ENCODE measurements at regions of chr1 and their contacts with region 1.

Region 1: DNA sequence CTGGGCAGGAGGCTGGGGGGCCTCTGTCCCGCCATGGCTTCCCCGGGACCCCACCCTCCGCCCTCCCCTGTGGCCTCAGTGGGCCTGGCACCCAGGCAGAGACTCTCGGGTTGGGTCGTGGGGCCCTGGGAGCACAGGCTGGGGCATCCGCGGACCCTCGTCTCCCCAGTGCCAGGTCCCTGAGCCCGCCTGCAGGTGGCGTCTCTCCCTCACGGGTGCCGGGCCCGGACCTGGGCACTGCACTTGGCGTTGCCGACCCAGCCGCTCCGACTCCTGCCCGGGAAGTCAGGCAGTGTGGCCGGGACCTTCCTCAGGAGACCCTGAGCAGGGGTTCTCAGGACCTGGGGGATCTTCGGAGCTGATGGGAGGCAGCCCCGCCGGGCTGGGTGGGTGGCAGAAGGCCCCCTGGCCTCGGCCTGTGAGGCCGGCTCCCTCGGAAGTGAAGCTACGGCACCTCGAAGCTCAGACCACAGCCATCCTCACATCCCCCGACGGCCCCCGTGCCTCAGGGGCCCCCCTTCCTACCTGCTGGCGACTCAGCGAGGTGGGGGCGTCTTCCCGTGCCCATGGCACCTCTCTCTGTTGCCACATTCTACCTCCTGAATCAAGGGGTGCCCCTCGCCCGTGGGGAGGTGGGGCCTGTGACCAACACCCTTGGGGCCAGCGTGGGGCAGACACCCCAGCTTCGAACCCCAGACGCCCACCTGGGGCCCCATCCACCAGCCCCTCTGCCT is 6.4 kb upstream of the C1orf159 start:
- DNase-seq: peak; percentile 78 to 92 (median 87)
- ATAC-seq: peak in 3 of 4 donors; percentile 88 to 94 (median 94)
- H3K4me3 ChIP-seq: peak overlapping the region in 10 of 12 donors; percentile 13 to 46 (median 32)
- H3K27ac ChIP-seq: no peak overlapping the region
- H3K4me1 ChIP-seq: peaks cover 0 to 11% (median 5%) of the 10 kb centered on the region in 12 donors
- H3K27me3 ChIP-seq: peaks cover 0 to 22% (median 0%) of the 10 kb centered on the region in 9 donors
- CTCF ChIP-seq: peak; percentile 84 to 95 (median 89)
- POLR2A ChIP-seq: no peak

Region 2: GRCh38 chr1:1171546-1172340 is 49.5 kb after region 1 on chr1:
- intact Hi-C with region 1: no loop called
- DNase-seq: peak in 3 of 5 donors; percentile 4 to 60 (median 17)
- ATAC-seq: no peak
- H3K4me3 ChIP-seq: no peak overlapping the region
- H3K27ac ChIP-seq: no peak overlapping the region
- H3K4me1 ChIP-seq: peaks cover 0 to 9% (median 0%) of the 10 kb centered on the region in 12 donors
- H3K27me3 ChIP-seq: peaks cover 28 to 91% (median 69%) of the 10 kb centered on the region in 9 donors
- CTCF ChIP-seq: no peak
- POLR2A ChIP-seq: no peak

Region 3: GRCh38 chr1:1225238-1225845 is 103.1 kb after region 1 on chr1:
- intact Hi-C with region 1: loop called in 5 of 10 experiments (anchors 5 to 10 kb)
- DNase-seq: no peak
- ATAC-seq: peak in 3 of 4 donors; percentile 11 to 36 (median 16)
- H3K4me3 ChIP-seq: no peak overlapping the region
- H3K27ac ChIP-seq: no peak overlapping the region
- H3K4me1 ChIP-seq: peaks cover 1 to 46% (median 16%) of the 10 kb centered on the region in 12 donors
- H3K27me3 ChIP-seq: no peaks in the 10 kb centered on the region
- CTCF ChIP-seq: no peak
- POLR2A ChIP-seq: no peak

Region 4: DNA sequence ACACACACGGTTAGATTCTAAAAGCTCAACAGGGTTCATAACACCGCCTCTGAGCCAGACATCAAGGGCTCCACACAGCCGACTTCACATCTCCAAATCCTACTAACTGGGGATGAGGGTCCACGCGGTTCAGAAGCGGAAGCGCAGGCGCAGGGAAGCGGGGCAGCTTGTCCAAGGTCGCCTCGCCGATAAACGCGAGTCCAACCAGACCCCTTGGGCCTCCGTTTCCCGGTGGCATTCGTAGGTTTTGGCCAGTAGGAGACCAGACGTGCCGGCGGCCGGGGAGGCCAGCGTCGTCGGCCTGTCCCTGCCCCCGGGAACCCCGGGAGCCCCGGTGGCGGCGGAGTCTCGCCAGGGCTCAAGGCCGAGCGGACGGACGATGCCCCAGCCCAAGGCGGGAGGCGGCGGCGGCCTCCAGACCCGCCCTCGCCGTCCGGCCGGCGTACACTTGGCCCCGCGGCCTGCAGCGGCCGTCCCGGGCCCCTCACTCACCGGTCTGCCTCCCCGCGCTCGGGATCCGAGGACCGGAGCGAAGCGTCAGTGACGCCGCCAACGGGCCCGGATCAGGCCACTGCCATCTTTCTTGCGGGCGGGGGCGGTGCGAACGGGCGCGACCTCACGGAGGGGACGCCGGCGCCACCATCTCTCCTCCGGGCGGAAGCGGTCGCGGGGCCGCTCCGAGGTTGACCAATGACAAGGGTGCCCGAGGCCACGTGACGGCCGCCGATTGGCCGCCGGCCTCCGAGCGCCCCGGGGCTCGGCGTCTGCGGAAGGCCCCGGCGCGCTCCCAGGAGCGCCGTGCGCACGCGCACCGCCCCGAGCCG is 109.4 kb after region 1 on chr1 and contains the start of gene SDF4:
- intact Hi-C with region 1: loop called in 5 of 10 experiments (anchors 5 to 10 kb)
- DNase-seq: peak; percentile 97 to 99 (median 98)
- ATAC-seq: peak; percentile 96 to 98 (median 97)
- H3K4me3 ChIP-seq: peak within 1 kb of the TSS; percentile 81 to 100 (median 98)
- H3K27ac ChIP-seq: peak within 1 kb of the TSS; percentile 92 to 99 (median 97)
- H3K4me1 ChIP-seq: peaks cover 8 to 49% (median 31%) of the 10 kb centered on the region in 12 donors
- H3K27me3 ChIP-seq: no peaks in the 10 kb centered on the region
- CTCF ChIP-seq: no peak
- POLR2A ChIP-seq: no peak
- total RNA-seq, gene SDF4: 102 to 167 (median 120) TPM

Region 5: DNA sequence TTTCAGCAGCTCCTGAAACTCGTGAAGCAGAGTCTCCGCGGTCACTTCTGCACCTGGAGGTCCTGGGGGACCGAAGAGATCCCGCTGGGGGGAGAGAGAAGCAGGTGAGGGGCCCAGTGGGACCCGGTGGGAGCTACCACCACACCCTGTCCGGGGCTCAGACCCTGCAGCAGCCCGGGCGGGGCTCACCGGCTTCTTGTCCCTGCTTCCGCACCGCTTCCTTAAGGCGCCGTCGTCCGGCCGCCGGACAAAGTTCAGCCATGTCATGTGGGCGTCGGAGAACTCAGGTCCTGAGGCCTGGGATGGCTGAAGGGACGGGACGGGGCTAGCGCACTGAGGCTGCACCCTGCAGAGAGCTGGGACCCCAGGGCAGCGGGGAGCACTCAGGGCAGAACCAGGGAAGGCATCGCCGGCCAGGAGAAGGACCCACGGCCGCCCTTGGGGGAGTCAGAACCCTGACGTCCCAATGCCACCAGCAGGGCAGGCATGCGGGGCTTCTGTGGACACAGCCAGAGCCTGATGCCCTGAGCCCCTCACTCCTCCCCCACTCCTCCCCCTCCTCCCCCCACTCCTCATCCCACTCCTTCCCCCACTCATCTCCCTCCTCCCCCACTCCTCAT is 122.1 kb after region 1 on chr1:
- intact Hi-C with region 1: loop called in 3 of 10 experiments (anchors 2 to 10 kb)
- DNase-seq: no peak
- ATAC-seq: peak in 1 of 4 donors; percentile 46
- H3K4me3 ChIP-seq: peak overlapping the region in 11 of 12 donors; percentile 6 to 55 (median 38)
- H3K27ac ChIP-seq: peak overlapping the region in 5 of 12 donors; percentile 13 to 57 (median 19)
- H3K4me1 ChIP-seq: peaks cover 0 to 27% (median 0%) of the 10 kb centered on the region in 12 donors
- H3K27me3 ChIP-seq: peaks cover 14 to 59% (median 27%) of the 10 kb centered on the region in 9 donors
- CTCF ChIP-seq: no peak
- POLR2A ChIP-seq: no peak

Region 6: DNA sequence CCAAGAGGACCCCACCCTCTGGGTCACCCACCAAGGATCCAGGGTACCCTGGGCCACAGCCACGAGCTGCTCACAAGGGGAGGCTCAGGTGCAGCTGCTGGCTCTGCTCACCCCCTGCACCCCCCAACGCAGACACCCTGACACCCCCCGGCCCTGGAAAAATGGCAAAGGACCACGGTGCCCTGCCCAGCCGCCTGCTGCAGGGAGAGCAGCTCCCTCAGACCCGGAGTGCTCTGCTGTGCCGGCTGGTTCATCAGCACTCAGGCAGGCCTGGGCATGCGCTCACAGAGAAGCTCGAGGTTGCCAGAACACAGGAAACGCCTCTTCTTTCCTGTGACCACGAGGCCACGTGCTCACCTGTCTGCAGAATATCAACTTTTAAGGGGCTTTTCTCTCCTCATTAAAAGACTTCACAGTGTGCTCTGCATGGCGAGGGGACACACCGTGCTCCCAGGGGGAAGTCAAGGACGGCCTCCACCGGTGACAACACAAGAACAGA is 128.6 kb after region 1 on chr1:
- intact Hi-C with region 1: loop called in 9 of 10 experiments (anchors 1 to 5 kb)
- DNase-seq: peak in 1 of 5 donors; percentile 62
- ATAC-seq: peak in 2 of 4 donors; percentile 15 to 22
- H3K4me3 ChIP-seq: no peak overlapping the region
- H3K27ac ChIP-seq: no peak overlapping the region
- H3K4me1 ChIP-seq: peaks cover 0 to 14% (median 0%) of the 10 kb centered on the region in 12 donors
- H3K27me3 ChIP-seq: peaks cover 1 to 22% (median 11%) of the 10 kb centered on the region in 9 donors
- CTCF ChIP-seq: no peak
- POLR2A ChIP-seq: no peak

Region 7: DNA sequence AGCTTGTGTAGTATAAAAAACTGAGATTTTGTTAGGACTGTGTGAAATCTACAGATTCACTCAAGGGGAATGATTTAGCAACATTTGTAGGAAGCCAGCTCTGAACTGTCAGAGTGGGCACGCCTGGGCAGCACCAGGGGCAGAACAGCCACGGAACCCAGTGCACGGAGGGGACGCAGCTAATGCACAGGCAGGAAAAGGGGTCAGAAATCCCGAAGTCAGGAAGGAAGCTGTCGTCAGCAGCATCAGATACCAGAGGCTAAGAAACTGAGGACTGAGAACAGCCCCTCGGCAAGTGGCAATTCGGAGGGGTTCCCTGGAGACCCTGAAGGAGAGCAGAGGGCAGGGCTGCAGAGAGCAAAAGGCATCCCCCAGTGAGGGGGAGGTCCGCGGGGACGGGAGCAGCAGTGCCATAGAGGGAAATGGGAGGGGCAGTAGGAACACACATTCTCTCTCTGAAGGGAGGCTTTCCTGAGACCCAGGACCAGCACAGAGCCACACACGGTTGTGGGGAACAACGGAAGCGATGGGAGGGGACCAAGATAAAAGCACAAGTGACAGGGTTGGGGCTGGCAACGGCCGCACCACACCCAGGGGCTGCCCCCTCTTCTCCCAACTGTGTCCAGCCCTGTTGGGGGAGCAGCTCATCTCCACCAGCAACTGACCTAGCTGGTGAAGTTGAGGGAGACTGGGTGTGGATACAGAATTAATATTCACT is 138.8 kb after region 1 on chr1:
- intact Hi-C with region 1: no loop called
- DNase-seq: peak in 1 of 5 donors; percentile 52
- ATAC-seq: peak in 3 of 4 donors; percentile 10 to 56 (median 17)
- H3K4me3 ChIP-seq: no peak overlapping the region
- H3K27ac ChIP-seq: peak overlapping the region in 3 of 12 donors; percentile 12 to 42 (median 39)
- H3K4me1 ChIP-seq: peaks cover 0 to 28% (median 14%) of the 10 kb centered on the region in 12 donors
- H3K27me3 ChIP-seq: no peaks in the 10 kb centered on the region
- CTCF ChIP-seq: no peak
- POLR2A ChIP-seq: no peak

Region 8: DNA sequence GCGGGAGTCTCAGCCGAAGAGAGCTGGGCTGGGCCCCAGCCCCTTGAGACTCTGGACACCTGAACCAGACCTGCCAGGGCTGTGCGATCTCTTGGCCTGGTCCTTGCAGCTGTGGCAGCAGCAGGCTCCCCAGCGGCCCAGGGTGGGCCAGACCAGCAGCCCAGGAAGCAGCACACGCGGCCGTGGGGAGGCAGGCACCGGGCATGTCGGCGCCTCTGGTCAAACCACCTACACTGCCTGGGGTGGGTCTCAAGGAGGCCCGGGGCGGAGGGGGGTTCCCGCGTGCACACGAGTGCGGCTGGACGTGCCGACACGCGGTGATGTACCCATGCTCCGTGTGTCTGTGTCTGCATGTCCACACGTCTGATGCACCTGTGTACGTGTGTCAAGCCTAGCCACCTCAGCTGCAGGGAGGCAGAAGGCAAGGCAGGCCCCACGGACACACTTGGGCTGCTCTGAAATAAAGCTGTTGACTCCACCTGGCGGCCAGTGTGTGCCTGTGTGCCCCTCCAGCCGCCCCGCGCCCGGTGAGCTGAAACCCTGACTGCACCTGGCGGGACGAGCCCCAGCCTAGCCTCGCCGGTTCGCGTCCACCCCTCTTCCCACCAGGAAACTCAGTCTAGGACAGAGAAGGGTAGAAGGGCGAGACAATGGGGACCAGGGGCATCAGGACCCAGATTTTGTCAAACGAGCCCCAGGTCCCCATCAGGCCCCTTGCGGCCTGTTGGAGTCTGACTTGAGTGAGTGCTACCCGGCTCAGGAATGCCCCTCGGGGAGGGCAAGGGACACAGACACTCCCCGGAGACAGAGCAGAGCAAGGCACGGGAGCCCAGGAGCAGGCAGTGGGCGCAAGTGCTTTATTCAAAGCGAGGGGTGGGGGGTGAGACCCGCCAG is 169.6 kb after region 1 on chr1:
- intact Hi-C with region 1: loop called in 9 of 10 experiments (anchors 1 to 5 kb)
- DNase-seq: peak in 4 of 5 donors; percentile 65 to 81 (median 73)
- ATAC-seq: peak; percentile 65 to 82 (median 66)
- H3K4me3 ChIP-seq: no peak overlapping the region
- H3K27ac ChIP-seq: no peak overlapping the region
- H3K4me1 ChIP-seq: peaks cover 0 to 15% (median 7%) of the 10 kb centered on the region in 12 donors
- H3K27me3 ChIP-seq: peaks cover 0 to 4% (median 0%) of the 10 kb centered on the region in 9 donors
- CTCF ChIP-seq: peak; percentile 47 to 69 (median 62)
- POLR2A ChIP-seq: no peak